Posterior vena cava (tissue), 2 donors: ENCODE measurements at regions of chr6 and their contacts with region 1.

Region 1: DNA sequence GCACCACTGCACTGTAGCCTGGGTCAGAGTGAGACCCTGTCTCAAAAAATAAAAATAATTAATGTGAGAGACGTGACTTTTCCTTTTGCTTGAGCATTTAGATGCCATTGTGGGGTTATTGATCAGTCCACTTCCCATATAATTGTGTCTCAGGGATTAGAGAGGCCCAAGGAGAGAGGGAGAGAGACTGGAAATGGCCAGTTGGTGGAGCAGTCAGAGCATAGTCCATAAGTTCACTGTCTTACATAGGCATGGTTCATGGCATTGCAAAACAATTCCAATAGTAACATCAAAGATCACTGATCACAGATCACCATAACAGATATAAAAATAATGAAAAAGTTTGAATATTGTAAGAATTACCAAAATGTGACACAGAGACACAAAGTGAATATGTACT is 15.2 kb upstream of the SDHAF4 start:
- DNase-seq: no peak

Region 2: DNA sequence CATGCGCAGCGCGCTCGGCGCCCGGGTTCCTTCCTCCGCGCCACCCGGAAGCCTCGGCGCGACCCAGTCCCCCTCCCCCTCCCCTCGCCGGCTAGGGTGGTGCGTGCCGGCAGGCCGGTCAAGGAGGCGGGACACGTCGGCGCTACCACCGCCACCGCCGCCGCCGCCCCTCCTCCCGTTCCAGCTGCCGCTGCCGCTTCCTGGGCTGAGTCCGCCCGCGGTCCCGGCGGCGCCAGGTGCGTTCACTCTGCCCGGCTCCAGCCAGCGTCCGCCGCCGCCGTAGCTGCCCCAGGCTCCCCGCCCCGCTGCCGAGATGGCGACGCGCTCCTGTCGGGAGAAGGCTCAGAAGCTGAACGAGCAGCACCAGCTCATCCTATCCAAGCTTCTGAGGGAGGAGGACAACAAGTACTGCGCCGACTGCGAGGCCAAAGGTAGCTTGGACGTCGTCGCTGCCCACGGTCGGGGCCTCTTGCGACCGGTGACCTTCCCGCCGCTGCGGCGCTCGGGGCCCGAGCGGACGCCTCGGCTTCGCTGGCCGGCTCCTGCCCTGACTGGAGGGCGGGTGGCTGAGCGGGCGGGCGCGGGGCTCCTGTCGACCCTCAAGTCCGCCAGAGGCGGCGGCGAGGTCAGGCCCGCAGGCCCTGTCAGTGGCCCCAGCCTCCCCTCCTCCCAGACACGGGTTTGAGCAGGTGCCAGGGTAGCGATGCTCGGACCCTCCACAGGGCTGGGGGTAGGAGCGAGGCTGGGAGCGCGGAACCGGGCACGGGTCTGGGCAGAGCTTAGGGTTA is 116.3 kb after region 1 on chr6 and contains the start of gene SMAP1:
- intact Hi-C with region 1: loop called in 1 of 2 experiments (anchors 10 kb)
- DNase-seq: peak; percentile 98
- total RNA-seq, gene SMAP1: 22.5 to 26.1 TPM

Region 3: GRCh38 chr6:70686548-70687133 is 135.1 kb after region 1 on chr6:
- intact Hi-C with region 1: loop called in 1 of 2 experiments (anchors 10 kb)
- DNase-seq: no peak